A549 (cell line): ENCODE measurements at regions of chr20 and their contacts with region 1.

Region 1: DNA sequence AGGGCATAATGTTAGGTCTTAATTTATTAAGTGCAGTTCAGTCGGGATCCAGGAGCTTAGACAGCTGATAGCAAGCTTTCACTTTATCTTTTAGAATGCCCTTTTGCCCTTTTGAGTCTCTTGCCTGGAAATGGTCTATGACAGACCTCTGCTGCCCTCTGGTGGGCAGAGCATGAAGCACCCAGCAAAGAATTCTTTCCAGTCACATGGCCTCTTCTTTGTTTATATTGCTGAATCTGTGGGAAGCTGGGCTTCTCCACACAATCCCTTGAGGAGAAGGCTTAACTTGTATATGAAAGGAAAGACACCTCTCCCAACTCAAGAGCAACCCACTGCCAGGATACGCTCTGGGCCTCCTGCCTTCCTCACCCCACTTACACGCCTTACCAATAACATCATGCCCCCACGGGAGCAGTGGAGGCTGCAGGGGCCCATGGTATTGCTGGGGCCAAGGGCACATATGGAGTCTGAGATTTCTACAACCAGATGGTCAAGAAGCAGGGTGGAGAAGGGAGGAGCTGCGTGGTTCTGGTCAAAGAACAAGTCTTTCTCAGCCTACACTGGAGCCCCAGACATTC is 20.4 kb downstream of the WFDC3 start:
- DNase-seq: peak; percentile 62 to 77
- ATAC-seq: peak; percentile 77 to 88
- H3K4me3 ChIP-seq: no peak overlapping the region
- H3K27ac ChIP-seq: no peak overlapping the region; a peak in 1 of 6 replicates
- H3K4me1 ChIP-seq: peaks cover 4% of the 10 kb centered on the region; the same call in 2 of the 3 replicates
- CTCF ChIP-seq: peak; percentile 98
- EP300 ChIP-seq: no peak
- POLR2A ChIP-seq: no peak
- RAD21 ChIP-seq: peak; percentile 96 to 97

Region 2: DNA sequence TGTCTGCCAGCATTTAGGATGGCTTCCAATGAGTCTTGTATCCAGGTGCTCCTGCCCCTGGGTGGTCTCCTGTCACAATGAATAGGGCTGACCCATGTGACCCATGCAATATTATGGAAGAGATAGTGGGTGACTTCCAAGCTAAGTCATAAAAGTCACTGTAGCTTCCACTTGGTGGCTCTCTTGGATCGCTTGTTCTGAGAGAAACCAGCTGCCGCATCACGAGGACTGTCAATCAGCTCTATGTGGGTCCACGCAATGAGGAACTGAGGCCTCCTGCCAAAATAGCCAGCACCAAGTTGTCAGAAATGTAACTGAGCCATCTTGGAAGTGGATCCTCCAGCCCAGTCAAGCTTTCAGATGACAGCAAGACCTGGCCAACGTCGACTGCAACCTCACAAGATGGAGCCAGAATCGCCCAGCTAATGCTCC is 448.3 kb before region 1 on chr20:
- CTCF ChIA-PET with region 1: interaction called, 112 read pairs
- POLR2A ChIA-PET with region 1: interaction called, 3 read pairs
- DNase-seq: peak in 1 of 2 experiments; percentile 63
- ATAC-seq: peak; percentile 61 to 71
- H3K4me3 ChIP-seq: no peak overlapping the region
- H3K27ac ChIP-seq: no peak overlapping the region
- H3K4me1 ChIP-seq: no peaks in the 10 kb centered on the region; the same call in 2 of the 3 replicates
- CTCF ChIP-seq: peak; percentile 59
- EP300 ChIP-seq: no peak
- POLR2A ChIP-seq: no peak
- RAD21 ChIP-seq: peak; percentile 81 to 82

Region 3: GRCh38 chr20:45373353-45374100 is 397.7 kb before region 1 on chr20:
- CTCF ChIA-PET with region 1: interaction called, 72 read pairs
- POLR2A ChIA-PET with region 1: no interaction called
- DNase-seq: peak; percentile 84 to 91
- ATAC-seq: peak; percentile 86 to 93
- H3K4me3 ChIP-seq: peak overlapping the region; percentile 43
- H3K27ac ChIP-seq: peak overlapping the region; percentile 40 to 73; a peak in 5 of 6 replicates
- H3K4me1 ChIP-seq: no peaks in the 10 kb centered on the region
- CTCF ChIP-seq: peak; percentile 94
- EP300 ChIP-seq: no peak
- POLR2A ChIP-seq: no peak
- RAD21 ChIP-seq: peak; percentile 87 to 89

Region 4: DNA sequence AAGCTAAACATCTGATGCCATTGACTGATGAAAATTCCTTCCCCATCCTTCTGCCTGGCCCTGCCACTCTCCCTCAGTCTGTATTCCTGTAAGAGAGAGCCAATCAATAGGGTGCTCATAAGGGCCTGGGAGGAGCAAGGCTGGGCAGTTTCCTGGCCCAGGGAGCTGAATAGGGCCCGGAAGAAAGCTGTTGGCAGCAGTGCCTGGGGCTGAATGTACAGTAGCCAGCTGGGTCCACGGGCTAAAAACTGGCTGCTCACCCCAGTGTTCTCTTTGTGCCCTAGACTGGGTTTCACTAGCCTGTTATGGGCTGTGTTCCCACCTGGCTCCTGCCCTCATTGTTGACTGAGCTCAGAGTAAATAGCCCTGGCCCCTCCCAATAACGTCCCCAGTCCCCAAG is 303.4 kb before region 1 on chr20:
- CTCF ChIA-PET with region 1: interaction called, 33 read pairs
- POLR2A ChIA-PET with region 1: no interaction called
- DNase-seq: no peak
- ATAC-seq: no peak
- H3K4me3 ChIP-seq: no peak overlapping the region
- H3K27ac ChIP-seq: no peak overlapping the region
- H3K4me1 ChIP-seq: peaks cover 8% of the 10 kb centered on the region; the same call in 2 of the 3 replicates
- CTCF ChIP-seq: no peak
- EP300 ChIP-seq: no peak
- POLR2A ChIP-seq: no peak
- RAD21 ChIP-seq: no peak

Region 5: DNA sequence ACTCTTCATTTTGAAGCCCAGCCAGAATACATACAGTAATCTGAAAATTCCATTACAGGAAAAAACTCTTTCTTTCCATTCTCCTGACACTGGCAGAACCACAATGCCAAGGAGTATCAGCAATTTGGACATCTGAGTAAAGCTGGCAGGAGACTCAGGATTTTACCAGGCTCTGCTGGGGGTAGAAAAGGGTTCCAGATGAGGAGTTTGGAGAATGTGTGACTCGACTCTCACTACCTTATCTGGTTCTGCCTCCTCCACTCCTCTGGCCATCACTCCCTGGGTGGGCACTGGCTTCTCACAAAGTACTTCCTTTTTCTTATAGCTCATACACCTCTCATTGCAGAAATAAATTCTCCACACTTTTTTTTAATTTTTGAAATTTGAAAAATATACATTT is 181.5 kb before region 1 on chr20:
- CTCF ChIA-PET with region 1: interaction called, 10 read pairs
- POLR2A ChIA-PET with region 1: no interaction called
- DNase-seq: no peak
- ATAC-seq: no peak
- H3K4me3 ChIP-seq: no peak overlapping the region
- H3K27ac ChIP-seq: no peak overlapping the region
- H3K4me1 ChIP-seq: no peaks in the 10 kb centered on the region
- CTCF ChIP-seq: no peak
- EP300 ChIP-seq: no peak
- POLR2A ChIP-seq: no peak
- RAD21 ChIP-seq: no peak

Region 6: DNA sequence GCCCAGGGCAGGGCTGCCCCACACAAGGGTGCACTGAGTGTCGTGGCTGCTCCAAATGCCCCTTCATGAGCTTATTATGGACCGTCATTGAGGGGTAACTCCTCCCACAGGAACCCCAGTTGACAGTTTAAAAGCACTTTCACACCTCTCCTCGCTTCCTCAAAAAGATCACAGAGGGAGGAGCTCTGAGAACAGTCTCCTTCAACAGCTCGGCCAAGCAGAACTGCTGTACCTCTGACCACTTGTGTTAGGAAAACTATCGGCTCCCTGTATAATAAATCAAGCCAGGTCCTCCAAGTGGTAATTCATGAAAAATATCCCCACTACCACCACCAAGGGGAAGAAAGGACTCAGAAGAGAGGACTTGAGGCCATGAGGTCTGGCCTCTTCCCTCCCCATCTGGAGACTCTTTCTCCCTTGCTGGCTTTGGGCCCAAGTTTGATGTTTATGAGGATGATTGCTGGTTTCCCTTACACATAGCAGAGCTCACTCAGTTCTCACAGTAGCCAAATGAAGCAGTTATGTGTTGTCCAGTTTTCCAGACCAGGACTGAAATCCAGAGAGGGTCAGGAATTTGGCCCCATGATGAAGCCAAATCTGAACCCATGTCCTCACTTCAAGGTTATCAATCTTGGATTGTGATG is 71.0 kb after region 1 on chr20:
- CTCF ChIA-PET with region 1: no interaction called
- POLR2A ChIA-PET with region 1: no interaction called
- DNase-seq: no peak
- ATAC-seq: no peak
- H3K4me3 ChIP-seq: no peak overlapping the region
- H3K27ac ChIP-seq: no peak overlapping the region
- H3K4me1 ChIP-seq: no peaks in the 10 kb centered on the region
- CTCF ChIP-seq: no peak
- EP300 ChIP-seq: no peak
- POLR2A ChIP-seq: no peak
- RAD21 ChIP-seq: no peak

Region 7: DNA sequence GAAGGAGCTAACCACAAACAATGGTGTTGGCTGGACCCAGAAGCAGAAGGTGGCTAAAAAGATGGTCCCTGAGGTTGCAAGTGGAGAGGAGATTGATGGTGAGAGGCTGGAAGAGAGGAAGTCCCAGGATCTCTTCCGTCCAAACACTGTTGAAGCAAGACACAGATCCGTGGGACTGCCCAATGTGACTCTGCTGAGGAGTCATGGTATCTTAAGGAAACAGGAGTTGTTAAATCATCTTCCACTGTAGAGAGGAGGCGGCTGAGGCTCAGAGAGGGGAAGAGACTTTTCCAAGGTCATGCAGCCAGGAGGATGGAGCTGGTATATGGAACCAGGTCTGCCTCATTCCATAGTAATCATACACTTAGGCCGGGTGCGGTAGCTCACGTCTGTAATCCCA is 204.8 kb after region 1 on chr20:
- CTCF ChIA-PET with region 1: no interaction called
- POLR2A ChIA-PET with region 1: no interaction called
- DNase-seq: no peak
- ATAC-seq: no peak
- H3K4me3 ChIP-seq: no peak overlapping the region
- H3K27ac ChIP-seq: no peak overlapping the region
- H3K4me1 ChIP-seq: peaks cover 10% of the 10 kb centered on the region; the same call in 2 of the 3 replicates
- CTCF ChIP-seq: no peak
- EP300 ChIP-seq: no peak
- POLR2A ChIP-seq: no peak
- RAD21 ChIP-seq: no peak